ENCODE measurements at regions of chr11 and their contacts with region 1.

Region 1: DNA sequence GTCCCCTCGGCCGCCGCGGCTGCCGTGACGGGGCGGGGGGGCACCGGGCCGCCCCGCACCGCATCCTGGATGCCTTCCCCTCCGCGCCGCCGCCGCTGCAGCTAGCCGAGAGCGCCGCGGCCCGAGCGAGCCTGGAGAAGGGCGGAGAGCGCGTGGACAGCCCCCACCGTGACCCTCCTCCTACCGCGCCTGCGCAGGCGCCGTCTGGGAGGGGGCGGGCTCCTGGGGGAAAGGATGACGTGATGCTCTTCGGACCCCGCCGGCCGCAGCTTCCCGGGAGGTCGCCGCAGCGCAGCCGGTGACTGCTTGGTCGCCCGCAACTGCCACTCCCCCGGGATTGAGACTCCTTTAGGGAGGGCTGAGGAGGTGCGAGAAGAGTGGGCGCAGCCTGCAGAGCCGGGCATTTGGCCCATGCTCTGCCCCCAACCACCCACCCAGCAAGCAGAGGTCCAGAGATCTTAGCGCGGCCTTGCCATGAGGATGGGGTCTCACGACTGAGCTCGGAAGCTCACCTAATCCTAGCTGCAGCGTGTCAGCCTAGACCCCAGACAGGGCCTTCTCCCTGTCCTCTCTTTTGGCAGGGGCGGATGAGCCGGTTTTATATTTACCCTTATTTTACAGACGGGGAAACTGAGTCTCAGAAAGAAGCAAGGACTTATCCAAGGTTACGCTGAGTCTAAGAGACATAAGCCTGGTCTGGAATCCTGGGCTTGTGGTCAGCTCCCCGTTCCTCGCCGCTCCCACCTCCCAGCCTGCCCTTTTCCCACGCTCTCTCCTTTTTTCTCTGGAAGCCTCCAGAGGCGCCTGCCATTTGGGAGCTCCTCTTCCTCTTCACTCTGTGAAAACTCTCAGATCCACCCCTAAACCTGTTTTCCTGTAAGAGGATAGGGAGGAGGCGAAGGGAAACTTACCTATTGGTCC is at the start of gene DENND5A:
- DNase-seq: peak; percentile 89 to 96 (median 93)
- ATAC-seq: peak; percentile 91
- H3K4me3 ChIP-seq: peak within 1 kb of the TSS; percentile 79 to 88
- H3K27ac ChIP-seq: peak within 1 kb of the TSS; percentile 96 to 99
- H3K4me1 ChIP-seq: peaks cover 9 to 39% of the 10 kb centered on the region in 2 donors
- H3K27me3 ChIP-seq: no peaks in the 10 kb centered on the region
- CTCF ChIP-seq: no peak
- polyA plus RNA-seq, gene DENND5A: 80.8 to 106 (median 96.7) TPM

Region 2: DNA sequence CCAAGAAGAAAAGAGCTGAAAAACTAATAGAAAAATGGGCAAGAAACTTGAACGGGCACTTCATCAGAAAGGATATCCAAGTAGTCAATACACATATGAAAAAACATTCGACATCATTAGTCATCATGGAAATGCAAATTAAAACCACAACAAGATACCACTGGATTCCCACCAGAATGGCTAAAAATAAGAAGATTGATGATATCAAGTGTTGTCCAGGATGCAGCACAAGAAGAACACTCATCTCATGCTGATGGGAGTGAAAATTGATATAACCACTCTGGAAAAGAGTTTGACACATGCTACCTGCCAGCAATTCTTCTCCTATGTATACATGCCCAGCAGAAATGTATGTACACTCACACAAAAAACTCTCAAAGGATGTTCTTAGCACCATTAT is 147.2 kb before region 1 on chr11:
- intact Hi-C with region 1: no loop called
- DNase-seq: no peak
- ATAC-seq: no peak
- H3K4me3 ChIP-seq: no peak overlapping the region
- H3K27ac ChIP-seq: no peak overlapping the region
- H3K4me1 ChIP-seq: no peaks in the 10 kb centered on the region
- H3K27me3 ChIP-seq: no peaks in the 10 kb centered on the region
- CTCF ChIP-seq: no peak

Region 3: GRCh38 chr11:9170450-9170849 is 95.0 kb before region 1 on chr11:
- intact Hi-C with region 1: loop called in 1 of 2 experiments (anchors 10 kb)
- DNase-seq: no peak
- ATAC-seq: peak; percentile 41
- H3K4me3 ChIP-seq: no peak overlapping the region
- H3K27ac ChIP-seq: no peak overlapping the region
- H3K4me1 ChIP-seq: no peaks in the 10 kb centered on the region
- H3K27me3 ChIP-seq: no peaks in the 10 kb centered on the region
- CTCF ChIP-seq: no peak

Region 4: GRCh38 chr11:9219572-9219971 is 45.9 kb before region 1 on chr11:
- intact Hi-C with region 1: no loop called
- DNase-seq: peak in 1 of 4 donors; percentile 7
- ATAC-seq: peak; percentile 21
- H3K4me3 ChIP-seq: no peak overlapping the region
- H3K27ac ChIP-seq: peak overlapping the region in 1 of 2 donors; percentile 20
- H3K4me1 ChIP-seq: peaks cover 0 to 29% of the 10 kb centered on the region in 2 donors
- H3K27me3 ChIP-seq: no peaks in the 10 kb centered on the region
- CTCF ChIP-seq: no peak